ENCODE measurements at regions of chr16 and their contacts with region 1.

Region 1: DNA sequence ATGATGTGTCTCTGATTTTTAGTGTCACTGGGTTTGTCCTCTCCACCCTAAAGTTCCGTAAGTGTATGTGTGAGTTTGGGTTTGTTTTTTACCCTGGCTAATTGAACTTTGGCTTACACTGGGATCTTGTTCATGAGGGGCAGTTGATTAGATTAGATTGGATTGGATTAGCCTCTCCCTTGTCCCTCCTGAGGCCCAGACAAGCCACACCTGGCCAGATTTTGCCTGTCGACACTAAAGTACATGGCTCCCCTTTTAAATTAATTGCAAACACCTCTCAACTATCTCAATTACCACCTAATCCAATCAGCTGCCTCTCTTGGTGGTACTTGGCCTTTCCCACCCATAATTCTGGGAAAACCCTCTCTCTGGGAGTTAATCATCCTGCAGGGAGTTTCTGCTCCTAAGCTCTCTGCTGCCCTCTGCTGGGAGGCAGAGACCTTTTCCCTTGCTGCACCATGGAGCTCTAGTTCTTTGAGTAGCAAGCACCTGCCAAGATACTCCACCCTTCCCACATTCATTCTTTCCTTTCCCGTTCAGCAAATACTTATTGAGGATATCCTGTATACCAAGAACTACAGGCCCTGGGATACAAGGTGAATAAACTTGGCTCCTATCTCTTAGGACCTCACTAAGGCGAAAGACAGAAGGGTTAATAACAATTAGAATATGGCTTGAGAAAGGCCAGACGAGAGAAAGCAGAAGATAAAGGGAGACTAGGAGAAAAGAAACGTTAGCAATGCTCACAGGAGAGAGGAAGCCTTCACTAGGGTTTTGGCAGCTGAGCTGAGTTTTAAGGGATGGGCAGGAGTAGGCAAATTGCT is 60.0 kb upstream of the MPHOSPH6 start:
- DNase-seq: no peak
- H3K4me3 ChIP-seq: no peak overlapping the region
- H3K27ac ChIP-seq: no peak overlapping the region
- H3K4me1 ChIP-seq: no peaks in the 10 kb centered on the region
- H3K27me3 ChIP-seq: peaks cover 0 to 12% (median 0%) of the 10 kb centered on the region in 4 donors
- CTCF ChIP-seq: peak; percentile 71 to 87 (median 87)
- EP300 ChIP-seq: no peak
- POLR2A ChIP-seq: no peak

Region 2: DNA sequence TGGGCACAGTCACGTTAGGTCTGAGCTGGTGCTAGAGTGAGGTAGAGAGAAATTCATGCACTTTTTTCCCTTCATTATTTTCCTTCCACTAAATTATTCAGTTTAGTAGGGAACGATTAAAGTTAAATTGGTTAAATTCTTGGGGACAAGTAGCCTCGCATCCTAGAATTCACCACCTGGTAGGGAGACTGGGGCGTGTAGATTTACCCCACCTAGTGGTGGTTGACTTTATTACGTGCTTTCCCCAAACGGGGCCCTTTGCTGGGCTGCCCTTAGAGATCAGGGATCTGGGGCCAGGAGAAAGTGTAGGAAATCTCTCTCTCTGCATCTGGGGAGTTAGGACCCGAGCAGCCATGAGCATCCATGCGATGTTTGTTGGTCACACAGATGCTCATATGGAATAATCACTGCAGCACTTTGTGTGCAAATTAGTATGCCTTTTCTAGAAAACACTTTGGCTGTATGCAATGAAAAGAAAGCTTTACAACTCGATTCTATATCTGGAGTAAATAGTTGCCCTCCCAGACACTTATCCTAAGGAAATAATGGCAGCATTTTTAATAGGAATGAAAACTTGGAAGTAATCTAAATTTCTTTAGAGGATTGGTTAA is 343.9 kb before region 1 on chr16:
- intact Hi-C with region 1: loop called (anchors 1 kb)
- DNase-seq: no peak
- H3K4me3 ChIP-seq: no peak overlapping the region
- H3K27ac ChIP-seq: no peak overlapping the region
- H3K4me1 ChIP-seq: peaks cover 0 to 6% (median 0%) of the 10 kb centered on the region in 4 donors
- H3K27me3 ChIP-seq: peaks cover 0 to 19% (median 0%) of the 10 kb centered on the region in 4 donors
- CTCF ChIP-seq: peak; percentile 28 to 56 (median 28)
- EP300 ChIP-seq: no peak
- POLR2A ChIP-seq: no peak

Region 3: GRCh38 chr16:81940781-81941560 is 289.0 kb before region 1 on chr16:
- intact Hi-C with region 1: loop called (anchors 5 kb)
- DNase-seq: no peak
- H3K4me3 ChIP-seq: no peak overlapping the region
- H3K27ac ChIP-seq: no peak overlapping the region
- H3K4me1 ChIP-seq: no peaks in the 10 kb centered on the region
- H3K27me3 ChIP-seq: peaks cover 0 to 27% (median 0%) of the 10 kb centered on the region in 4 donors
- CTCF ChIP-seq: peak in 2 of 3 experiments; percentile 17 to 43
- EP300 ChIP-seq: no peak
- POLR2A ChIP-seq: no peak

Region 4: DNA sequence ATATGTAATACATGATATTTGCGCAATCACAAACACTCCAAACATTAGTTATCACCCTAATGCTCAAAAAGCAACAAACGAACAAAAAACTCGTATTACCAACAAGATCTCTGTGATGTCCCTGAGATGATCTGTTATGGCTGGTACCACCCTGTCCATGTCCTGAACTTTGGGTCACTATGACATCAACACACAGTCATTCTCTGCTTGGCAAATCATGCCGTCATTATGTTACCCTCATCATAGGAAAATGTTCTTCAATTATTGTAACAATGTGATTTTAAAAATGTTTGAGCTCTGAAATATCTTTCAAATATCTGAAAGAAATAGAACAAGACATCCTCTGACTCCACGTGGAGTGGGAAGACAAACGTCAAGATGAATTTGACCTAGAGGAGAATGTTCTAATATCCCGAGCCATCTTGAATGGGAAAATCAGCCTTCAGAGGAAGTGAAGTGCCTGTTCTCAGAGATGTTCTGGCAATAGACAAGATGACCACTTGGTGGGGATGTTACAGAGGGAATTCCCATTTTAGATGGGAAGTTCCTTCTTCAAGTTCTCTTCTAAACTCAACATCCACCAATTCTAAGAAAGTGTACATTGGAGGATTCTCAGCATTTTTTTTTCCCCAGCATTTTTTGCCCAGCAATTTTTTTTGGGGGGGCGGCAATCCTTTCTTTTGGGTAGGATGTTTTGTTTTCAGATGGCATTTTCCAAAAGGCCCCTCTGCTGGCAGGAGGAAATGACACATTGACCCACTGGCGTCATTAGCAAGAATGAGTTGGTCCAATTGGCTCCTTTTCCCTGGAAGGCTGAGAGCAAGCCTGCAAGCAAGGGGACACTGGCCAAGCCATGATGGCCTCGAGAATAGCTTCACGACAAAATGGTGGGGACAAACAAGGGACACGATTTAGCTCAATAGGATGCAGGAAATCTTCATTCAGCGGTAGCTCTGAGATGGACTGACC is 198.6 kb before region 1 on chr16:
- intact Hi-C with region 1: loop called (anchors 10 kb)
- DNase-seq: no peak
- H3K4me3 ChIP-seq: no peak overlapping the region
- H3K27ac ChIP-seq: no peak overlapping the region
- H3K4me1 ChIP-seq: no peaks in the 10 kb centered on the region
- H3K27me3 ChIP-seq: peaks cover 0 to 11% (median 0%) of the 10 kb centered on the region in 4 donors
- CTCF ChIP-seq: peak in 1 of 3 experiments; percentile 39
- EP300 ChIP-seq: no peak
- POLR2A ChIP-seq: no peak

Measured in esophagus muscularis mucosa (tissue), 4 donors.